ENCODE measurements at regions of chr13 and their contacts with region 1.

Region 1: GRCh38 chr13:21297914-21298831 is 121.7 kb downstream of the MRPL57 start:
- DNase-seq: peak; percentile 85
- H3K4me3 Mint-ChIP-seq: peak overlapping the region; percentile 81
- H3K27ac Mint-ChIP-seq: no peak overlapping the region
- H3K4me1 Mint-ChIP-seq: peaks cover 20% of the 10 kb centered on the region
- H3K27me3 Mint-ChIP-seq: no peaks in the 10 kb centered on the region

Region 2: DNA sequence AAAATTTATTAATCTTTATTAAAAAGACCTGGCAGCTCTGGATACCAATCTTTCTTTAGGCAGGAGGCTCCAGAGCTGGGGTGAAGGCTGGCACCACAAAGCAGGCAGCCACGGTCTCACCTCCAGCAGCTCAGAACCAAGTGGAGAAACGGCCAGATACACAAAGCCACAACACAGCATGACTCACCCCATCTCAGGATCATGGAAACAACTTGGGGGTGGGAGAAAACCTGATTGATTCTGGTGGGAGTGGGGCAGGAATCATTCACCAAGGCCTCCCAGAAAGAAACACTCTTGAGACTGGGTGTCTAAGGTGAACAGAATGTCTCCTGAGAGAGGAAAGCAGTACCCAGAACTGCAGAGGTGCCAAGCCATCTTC is 836.7 kb before region 1 on chr13:
- CTCF ChIA-PET with region 1: no interaction called
- intact Hi-C with region 1: no loop called
- DNase-seq: peak; percentile 55
- H3K4me3 Mint-ChIP-seq: no peak overlapping the region
- H3K27ac Mint-ChIP-seq: peak overlapping the region; percentile 70
- H3K4me1 Mint-ChIP-seq: peaks cover 24% of the 10 kb centered on the region
- H3K27me3 Mint-ChIP-seq: no peaks in the 10 kb centered on the region

Region 3: DNA sequence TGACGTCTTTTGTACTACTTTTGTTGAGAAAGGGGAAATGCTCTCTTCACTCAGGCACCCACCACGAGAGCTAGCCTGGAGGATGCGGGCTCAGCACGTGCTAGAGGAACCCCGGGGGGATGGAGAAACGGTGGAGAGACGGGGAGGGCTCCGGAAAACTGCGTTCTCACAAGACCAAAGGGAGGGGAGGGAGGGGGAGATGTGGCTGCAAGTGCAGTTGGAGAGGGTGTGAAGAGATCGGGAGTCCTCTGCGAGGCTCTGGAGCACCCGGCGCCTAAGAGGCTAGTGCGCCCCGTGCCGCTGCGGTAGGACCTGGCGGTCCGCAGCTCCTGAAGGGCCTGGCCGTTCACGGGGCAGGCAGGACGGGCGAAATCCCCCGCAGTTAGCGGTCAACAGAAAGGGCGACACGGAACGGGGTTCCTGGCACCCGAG is 352.2 kb before region 1 on chr13:
- CTCF ChIA-PET with region 1: no interaction called
- intact Hi-C with region 1: loop called (anchors 2 kb)
- DNase-seq: peak; percentile 9
- H3K4me3 Mint-ChIP-seq: peak overlapping the region; percentile 21
- H3K27ac Mint-ChIP-seq: no peak overlapping the region
- H3K4me1 Mint-ChIP-seq: peaks cover 10% of the 10 kb centered on the region
- H3K27me3 Mint-ChIP-seq: peaks cover 44% of the 10 kb centered on the region

Region 4: DNA sequence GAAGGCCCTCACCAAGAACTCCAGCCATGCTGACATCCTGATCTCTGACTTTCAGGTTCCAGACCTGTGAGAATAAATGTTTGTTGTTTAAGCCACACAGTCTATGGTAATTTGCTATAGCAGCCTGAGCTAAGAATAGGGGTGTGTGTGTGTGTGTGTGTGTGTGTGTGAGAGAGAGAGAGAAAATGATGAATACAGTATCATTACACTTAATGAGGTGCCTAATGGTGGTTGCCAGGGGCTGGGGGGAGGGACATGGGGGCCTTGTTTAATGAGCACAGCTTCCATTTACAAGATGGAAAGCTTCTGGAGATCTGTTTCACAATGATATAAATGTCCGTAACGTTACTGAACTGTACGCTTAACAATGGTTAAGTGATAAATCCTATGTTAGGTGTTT is 182.9 kb before region 1 on chr13:
- CTCF ChIA-PET with region 1: interaction called, 5 read pairs
- intact Hi-C with region 1: loop called (anchors 10 kb)
- DNase-seq: no peak
- H3K4me3 Mint-ChIP-seq: no peak overlapping the region
- H3K27ac Mint-ChIP-seq: no peak overlapping the region
- H3K4me1 Mint-ChIP-seq: no peaks in the 10 kb centered on the region
- H3K27me3 Mint-ChIP-seq: no peaks in the 10 kb centered on the region

Region 5: DNA sequence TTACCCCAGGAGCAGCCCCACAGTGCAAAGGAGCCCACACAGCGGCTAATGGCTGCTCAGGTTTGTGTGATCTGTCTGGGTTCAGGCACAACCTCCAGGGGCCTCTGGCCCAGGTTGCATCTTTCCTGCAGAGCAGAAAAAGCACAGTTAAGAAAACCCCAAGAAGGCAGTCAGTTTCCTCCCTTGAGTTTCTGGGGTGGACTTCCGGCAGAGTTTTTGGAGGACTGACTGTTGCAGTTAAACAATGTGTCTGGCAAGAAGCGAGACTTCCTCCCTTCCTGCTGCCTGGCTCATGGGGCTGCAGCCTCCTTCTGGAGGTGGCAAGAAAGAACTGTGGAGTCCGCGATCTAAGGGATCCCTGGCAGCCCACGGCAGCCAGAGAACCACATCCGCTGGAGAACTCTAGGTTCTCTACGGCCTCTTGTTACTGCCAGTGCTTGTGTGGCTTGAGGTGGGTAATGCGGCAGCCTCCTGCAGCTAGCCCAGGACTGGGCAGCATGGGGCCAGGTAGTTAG is 46.5 kb after region 1 on chr13:
- CTCF ChIA-PET with region 1: interaction called, 11 read pairs
- intact Hi-C with region 1: loop called (anchors 2 kb)
- DNase-seq: peak; percentile 48
- H3K4me3 Mint-ChIP-seq: peak overlapping the region; percentile 36
- H3K27ac Mint-ChIP-seq: peak overlapping the region; percentile 78
- H3K4me1 Mint-ChIP-seq: peaks cover 25% of the 10 kb centered on the region
- H3K27me3 Mint-ChIP-seq: no peaks in the 10 kb centered on the region

Region 6: DNA sequence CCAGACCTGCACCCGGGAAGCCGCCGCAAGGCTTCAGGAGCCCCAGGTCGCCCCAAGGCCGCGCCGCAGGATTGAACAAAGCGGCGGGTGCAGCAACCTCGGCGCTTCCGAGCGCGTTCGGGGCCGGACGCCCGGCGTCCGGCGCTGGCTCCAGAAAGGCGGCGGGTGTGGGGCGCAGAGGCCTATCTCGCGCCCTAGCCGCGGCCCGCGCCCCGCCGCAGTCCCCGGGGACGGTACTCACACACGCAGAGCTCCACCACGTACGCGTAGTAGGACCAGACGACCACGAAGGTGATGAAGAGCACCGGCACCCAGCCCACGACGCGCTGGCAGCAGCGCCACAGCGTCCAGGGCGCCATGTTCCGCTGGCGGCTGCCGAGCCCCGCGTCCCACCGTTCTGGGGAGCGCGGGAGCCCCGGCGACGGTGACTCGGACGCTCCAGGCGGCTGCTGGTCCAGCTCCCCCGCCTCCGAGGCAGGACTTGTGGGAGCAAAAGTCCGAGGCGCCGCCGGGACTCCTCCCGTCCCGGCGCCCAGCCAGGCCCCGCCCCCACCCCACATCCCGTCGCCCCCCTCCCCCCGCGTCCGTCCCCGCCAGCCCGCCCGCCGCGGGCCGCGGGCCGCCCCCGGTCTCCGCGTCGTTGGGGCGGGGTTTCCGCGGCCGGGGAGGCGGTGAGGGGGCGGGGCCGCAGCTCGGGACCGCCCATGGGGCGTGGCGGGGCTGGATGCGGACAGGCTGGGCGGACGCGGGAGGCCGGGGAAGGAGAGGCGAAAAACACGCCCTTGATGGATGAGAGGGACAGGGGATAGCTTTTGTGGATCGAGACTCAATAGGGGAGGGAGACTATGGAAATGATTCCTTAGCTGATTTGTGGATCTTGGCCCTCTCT is 160.9 kb after region 1 on chr13 and contains the start of gene ZDHHC20:
- CTCF ChIA-PET with region 1: interaction called, 5 read pairs
- intact Hi-C with region 1: loop called (anchors 1 kb)
- DNase-seq: peak; percentile 89
- H3K4me3 Mint-ChIP-seq: peak within 1 kb of the TSS; percentile 92
- H3K27ac Mint-ChIP-seq: peak within 1 kb of the TSS; percentile 88
- H3K4me1 Mint-ChIP-seq: peaks cover 29% of the 10 kb centered on the region
- H3K27me3 Mint-ChIP-seq: no peaks in the 10 kb centered on the region
- total RNA-seq, gene ZDHHC20: 48.0 to 50.7 TPM

Region 7: GRCh38 chr13:21603531-21604448 is 305.6 kb after region 1 on chr13 and contains the start of gene MICU2:
- CTCF ChIA-PET with region 1: interaction called, 5 read pairs
- intact Hi-C with region 1: loop called (anchors 1 kb)
- DNase-seq: peak; percentile 97
- H3K4me3 Mint-ChIP-seq: peak within 1 kb of the TSS; percentile 84
- H3K27ac Mint-ChIP-seq: peak within 1 kb of the TSS; percentile 90
- H3K4me1 Mint-ChIP-seq: peaks cover 28% of the 10 kb centered on the region
- H3K27me3 Mint-ChIP-seq: peaks cover 3% of the 10 kb centered on the region
- total RNA-seq, gene MICU2: 27.5 to 28.2 TPM

Region 8: DNA sequence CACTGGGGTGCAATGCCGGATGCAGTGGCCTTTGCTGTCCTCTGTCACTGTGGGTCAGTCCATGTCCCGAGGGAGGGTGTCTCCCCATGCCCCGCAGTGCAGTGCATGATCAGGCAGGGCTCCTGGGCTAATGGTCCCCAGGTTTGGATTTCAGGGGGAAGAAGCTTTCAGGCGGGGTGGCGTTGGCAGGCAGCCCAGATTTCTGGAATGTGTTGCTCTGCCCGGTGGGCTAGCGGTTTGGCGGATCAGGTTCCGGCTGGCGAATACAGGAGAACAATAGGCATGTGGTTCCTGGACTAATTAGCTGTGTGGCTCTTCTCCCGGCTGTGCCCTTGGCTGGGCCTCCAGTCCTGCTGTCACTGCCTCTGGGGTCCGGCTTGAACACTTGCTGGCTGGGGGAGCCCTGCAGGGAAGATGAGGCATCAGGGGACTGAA is 514.0 kb after region 1 on chr13:
- CTCF ChIA-PET with region 1: no interaction called
- intact Hi-C with region 1: no loop called
- DNase-seq: no peak
- H3K4me3 Mint-ChIP-seq: no peak overlapping the region
- H3K27ac Mint-ChIP-seq: no peak overlapping the region
- H3K4me1 Mint-ChIP-seq: no peaks in the 10 kb centered on the region
- H3K27me3 Mint-ChIP-seq: peaks cover 4% of the 10 kb centered on the region

Measured in activated naive CD4-positive, alpha-beta T cell treated with anti-CD3 and anti-CD28 coated beads for 36 hours (primary cell).